GM10248 (cell line): ENCODE measurements at regions of chr6 and their contacts with region 1.

Region 1: GRCh38 chr6:28383235-28384142 is 16.1 kb downstream of the ZSCAN12 start:
- DNase-seq: peak; percentile 84
- CTCF ChIP-seq: peak; percentile 46

Region 2: DNA sequence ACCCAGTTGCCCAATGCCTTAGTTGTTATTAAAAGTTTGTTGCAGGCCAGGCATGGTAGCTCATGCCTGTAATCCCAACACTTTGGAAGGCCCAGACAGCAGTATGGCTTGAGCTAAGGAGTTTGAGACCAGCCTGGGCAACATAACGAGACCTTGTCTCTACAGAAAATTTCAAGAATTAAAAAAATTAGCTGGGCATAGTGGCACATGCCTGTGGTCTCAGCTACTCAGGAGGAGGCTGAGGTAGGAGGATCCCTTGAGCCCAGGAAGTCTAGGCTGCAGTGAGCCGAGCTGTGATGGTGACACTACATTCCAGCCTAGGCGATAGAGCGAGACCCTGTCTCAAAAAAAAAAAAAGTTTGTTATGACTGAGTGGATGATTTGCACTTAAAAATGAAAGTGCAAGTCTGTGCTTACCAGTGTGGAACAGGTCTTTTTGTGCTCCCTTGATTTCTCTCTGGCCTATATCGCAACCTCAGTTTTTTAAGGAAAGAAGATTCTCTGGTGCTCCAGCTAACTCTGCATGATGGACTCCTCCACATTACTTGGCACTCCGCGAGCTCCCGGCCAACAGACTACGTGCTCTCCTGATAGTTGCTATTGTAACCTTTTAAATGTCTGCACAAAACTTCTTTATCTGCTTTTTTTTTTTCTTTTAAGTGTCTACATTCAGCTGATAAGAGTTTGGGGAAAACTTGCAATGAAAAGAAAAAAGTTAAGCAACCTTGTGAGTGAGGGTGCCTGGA is 11.6 kb before region 1 on chr6:
- CTCF ChIA-PET with region 1: interaction called, 24 read pairs
- POLR2A ChIA-PET with region 1: interaction called, 3 read pairs
- DNase-seq: peak; percentile 52
- CTCF ChIP-seq: no peak

Region 3: DNA sequence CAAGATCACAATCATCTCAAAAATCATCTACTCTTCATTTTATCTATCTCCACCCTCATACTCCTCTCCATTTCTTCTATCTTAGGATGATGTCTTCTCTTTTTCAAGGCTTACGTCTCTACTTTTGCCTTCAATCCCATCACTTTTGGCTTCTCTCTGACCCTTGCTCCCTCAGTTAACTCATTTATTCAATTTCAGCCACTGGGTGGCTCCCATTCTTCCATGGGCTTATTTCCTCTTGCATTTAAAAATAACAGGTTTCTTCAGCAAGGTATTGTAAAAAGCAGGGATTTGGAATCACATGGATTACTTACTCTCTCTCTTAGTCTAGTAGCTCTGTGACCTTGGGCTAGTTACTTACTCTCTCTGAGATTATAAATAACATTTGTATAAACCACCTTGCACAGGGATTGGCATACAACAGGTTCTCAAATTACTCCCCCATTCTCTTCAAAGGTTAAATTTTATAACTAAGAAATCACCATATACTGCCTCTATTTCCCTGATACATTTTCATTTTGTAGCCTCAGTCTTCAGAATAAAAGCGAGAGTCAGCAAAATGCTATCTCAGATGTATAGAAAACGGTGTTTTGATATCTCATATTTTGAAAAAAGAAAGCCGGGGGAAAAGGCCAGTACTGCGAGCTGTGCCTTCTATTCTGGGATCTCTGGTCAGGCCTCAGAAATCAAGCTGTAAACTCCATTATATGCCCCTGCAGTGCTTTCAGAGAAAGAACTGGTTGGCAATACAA is 10.6 kb after region 1 on chr6:
- CTCF ChIA-PET with region 1: interaction called, 11 read pairs
- POLR2A ChIA-PET with region 1: interaction called, 3 read pairs
- DNase-seq: no peak
- CTCF ChIP-seq: peak; percentile 1

Region 4: DNA sequence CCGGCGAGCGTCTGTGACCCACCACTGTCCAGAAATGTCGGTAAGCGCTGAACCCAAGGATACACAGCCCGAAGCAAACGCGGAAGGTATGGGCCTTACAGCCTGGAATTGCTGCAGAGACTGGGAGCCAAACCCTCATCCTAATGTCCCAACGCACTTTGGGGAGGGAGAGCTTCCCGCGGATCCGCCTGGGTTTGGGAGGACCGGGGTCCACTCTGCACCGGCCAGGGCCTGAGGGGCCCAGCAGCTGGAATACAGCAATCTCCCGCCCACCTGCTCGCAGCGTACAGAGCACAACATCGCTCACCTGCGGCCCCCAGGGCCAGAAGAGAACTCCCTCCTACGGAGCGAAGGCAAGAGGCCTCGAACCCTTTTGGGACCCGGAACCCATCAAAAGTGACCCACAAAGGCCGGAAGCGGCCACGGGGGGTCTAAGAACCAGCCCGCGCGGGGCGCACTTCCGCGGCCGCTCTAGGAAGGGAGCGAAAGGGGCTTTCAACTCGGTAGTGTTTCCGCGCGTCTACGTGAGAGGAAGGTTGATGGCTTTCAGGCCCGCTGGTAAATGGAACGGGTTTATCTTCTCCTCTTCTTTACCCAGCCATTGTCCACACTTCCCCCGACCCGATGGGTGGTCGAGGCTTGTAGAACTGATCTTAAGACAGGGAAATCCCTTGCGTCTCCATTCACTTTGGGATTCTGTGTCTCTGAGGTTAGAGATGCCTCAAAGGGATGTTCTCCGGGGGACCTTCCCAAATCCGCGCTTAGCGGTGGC is 16.0 kb after region 1 on chr6 and contains the start of gene ZSCAN12:
- CTCF ChIA-PET with region 1: interaction called, 11 read pairs
- POLR2A ChIA-PET with region 1: interaction called, 3 read pairs
- DNase-seq: peak; percentile 85
- CTCF ChIP-seq: peak; percentile 55